ENCODE measurements at regions of chr9 and their contacts with region 1.

Region 1: DNA sequence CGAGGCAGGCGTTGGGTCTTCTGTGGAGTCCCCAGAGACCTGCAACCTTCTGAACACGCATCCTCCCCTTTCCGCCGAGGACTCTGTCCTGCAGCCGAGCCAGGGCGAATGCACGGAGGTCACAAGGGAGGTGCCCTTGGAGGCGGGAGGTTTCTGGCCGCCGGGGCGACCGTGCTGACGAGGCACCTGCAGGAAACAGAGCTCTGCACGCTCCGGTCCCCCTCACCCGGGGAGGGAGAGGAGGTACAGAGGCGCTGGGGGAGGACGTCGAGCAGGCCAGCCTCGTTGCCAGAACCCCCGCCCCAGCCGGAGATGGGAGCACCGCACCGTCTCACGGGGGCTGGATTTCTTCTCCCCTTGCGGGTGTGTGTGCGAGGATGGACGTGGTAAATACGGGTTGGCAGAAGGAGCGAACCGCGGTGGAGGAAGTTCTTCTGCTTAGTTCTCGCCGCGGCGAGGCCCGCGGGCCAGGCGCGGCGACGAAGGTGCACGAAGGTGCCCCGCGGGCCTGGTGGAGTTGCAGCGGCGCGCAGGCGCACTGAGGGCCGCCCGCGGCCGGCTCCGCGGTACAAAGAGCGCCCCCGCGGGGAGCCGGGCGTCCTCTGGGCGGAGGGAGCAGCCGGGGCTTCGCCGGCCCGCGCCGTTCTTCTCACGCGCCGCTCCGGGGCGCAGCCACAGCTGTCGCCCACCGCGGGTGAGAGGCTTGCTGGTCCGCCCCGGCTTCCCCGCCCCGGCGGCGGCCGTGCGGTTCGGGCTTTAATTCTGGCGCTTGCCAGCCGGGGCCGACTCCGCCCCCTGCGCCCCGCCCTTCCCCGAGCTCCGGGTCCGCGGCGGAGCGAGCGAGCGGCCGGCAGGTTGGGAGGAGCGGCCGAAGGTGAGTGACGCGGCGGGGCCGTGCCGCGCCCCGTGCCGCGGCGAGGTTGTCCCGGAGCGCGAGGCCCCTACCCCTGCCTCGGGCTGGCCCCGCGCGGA is 289.5 kb downstream of the DOCK8 start:
- DNase-seq: peak; percentile 81
- H3K4me3 ChIP-seq: peak within 1 kb of the TSS; percentile 62 to 82 (median 70)
- H3K27ac ChIP-seq: peak within 1 kb of the TSS; percentile 80 to 85 (median 83)
- H3K4me1 ChIP-seq: peaks cover 0 to 23% (median 14%) of the 10 kb centered on the region in 4 donors
- H3K27me3 ChIP-seq: no peaks in the 10 kb centered on the region
- CTCF ChIP-seq: no peak
- EP300 ChIP-seq: no peak
- POLR2A ChIP-seq: no peak

Region 2: DNA sequence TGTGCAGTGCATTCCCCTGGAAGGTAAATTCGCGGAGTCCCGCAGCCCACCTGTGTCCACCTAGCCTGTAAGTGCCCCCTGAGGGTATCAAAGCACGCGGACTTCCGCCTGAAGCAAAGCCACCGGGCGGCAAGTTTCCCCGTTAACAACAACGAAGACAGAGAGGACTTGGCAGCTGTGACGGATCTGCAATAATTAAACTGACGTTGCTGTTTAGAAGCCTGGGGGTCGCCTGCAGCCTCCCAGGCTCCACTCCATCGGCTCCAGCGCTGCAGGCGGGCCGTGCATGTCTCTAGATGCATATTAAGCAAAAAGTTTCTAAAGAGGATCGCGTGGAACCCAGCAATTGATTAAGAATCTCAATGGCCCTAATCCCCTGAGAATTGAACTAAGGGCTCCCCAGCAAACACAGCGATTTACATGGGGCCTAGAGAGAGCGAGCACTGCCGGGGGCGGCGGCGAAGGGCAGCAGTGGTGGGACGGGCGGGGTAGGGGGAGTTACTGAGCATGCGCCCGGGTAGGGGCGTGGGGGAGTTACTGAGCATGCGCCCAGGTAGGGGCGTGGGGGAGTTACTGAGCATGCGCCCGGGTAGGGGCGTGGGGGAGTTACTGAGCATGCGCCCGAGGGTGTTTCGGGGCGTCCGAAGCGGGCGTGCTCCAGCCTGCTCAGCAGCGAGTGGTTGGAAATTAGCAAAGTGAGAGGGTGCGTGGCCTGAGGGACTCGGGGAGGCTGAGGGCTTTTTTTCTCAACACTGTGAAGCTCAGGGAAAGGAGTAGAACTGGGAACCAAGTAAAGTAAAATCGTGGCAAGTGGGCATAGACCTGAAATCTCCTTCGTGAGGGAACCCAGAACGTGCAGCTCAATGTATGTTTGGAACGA is 34.3 kb before region 1 on chr9:
- intact Hi-C with region 1: loop called (anchors 1 kb)
- DNase-seq: peak; percentile 92
- H3K4me3 ChIP-seq: peak overlapping the region; percentile 46 to 67 (median 64)
- H3K27ac ChIP-seq: peak overlapping the region; percentile 75 to 86 (median 78)
- H3K4me1 ChIP-seq: peaks cover 0 to 23% (median 14%) of the 10 kb centered on the region in 4 donors
- H3K27me3 ChIP-seq: no peaks in the 10 kb centered on the region
- CTCF ChIP-seq: no peak
- EP300 ChIP-seq: no peak
- POLR2A ChIP-seq: peak in 1 of 2 donors; percentile 27

Region 3: DNA sequence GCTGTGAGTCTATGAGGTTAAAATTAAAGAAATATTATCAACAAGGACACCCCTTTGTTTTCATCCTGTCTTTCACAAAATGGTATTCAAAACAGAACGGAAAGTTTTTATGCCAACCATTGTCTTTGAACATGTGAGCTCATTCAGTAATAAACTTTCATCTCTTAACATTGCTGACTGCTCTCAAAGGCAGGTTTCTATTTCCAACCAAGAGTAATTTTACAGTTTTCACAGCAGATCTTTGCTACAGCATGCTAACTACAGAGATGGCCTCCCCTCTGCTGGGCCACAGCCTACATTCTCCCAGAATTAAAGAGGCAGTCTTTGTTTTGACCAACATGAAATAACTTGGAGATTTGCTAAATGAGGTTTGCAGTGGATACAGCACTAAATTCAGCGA is 647.5 kb after region 1 on chr9:
- intact Hi-C with region 1: no loop called
- DNase-seq: no peak
- H3K4me3 ChIP-seq: no peak overlapping the region
- H3K27ac ChIP-seq: no peak overlapping the region
- H3K4me1 ChIP-seq: no peaks in the 10 kb centered on the region
- H3K27me3 ChIP-seq: no peaks in the 10 kb centered on the region
- CTCF ChIP-seq: no peak
- EP300 ChIP-seq: no peak
- POLR2A ChIP-seq: no peak